Activated T-helper 1 cell treated with anti-CD3 and anti-CD28 coated beads, Interleukin-12 subunit alpha, Interleukin-12 subunit beta, Interleukin-2, Interleukin-4 antibody, amounts not matched to agents 30 ng/mL and 10 ng/mL and 1 ng/mL, durations not matched to agents 14 hours and 24 hours and 36 hours (primary cell): ENCODE measurements at regions of chr1 and their contacts with region 1.

Region 1: DNA sequence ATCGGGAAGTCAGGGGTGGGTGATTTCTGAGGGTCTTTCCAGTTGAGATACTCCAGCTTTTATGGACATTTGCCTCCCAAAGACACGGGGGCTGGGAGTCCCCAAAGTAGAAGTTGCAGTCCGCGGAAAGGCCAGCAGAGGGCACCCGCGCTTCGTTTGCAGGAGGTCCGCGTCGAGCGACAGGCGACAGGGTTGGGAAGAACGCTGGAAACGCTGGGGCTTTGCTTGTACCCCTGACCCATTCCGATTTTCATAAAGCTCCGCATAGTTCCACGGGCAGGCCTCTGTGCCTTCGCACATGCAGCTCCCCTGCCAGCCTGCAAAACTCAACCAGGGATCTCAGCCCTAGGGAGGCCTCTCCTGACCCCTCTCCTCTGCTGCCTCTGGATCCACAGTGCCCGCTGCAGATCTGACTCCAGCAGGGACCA is 44.2 kb upstream of the LAPTM5 start:
- DNase-seq: peak; percentile 63
- H3K4me3 Mint-ChIP-seq: no peak overlapping the region
- H3K27ac Mint-ChIP-seq: no peak overlapping the region
- H3K4me1 Mint-ChIP-seq: no peaks in the 10 kb centered on the region
- H3K27me3 Mint-ChIP-seq: peaks cover 42% of the 10 kb centered on the region

Region 2: GRCh38 chr1:30911046-30911954 is 109.5 kb after region 1 on chr1:
- intact Hi-C with region 1: loop called (anchors 1 kb)
- DNase-seq: peak; percentile 13
- H3K4me3 Mint-ChIP-seq: no peak overlapping the region
- H3K27ac Mint-ChIP-seq: no peak overlapping the region
- H3K4me1 Mint-ChIP-seq: peaks cover 8% of the 10 kb centered on the region
- H3K27me3 Mint-ChIP-seq: peaks cover 35% of the 10 kb centered on the region

Region 3: DNA sequence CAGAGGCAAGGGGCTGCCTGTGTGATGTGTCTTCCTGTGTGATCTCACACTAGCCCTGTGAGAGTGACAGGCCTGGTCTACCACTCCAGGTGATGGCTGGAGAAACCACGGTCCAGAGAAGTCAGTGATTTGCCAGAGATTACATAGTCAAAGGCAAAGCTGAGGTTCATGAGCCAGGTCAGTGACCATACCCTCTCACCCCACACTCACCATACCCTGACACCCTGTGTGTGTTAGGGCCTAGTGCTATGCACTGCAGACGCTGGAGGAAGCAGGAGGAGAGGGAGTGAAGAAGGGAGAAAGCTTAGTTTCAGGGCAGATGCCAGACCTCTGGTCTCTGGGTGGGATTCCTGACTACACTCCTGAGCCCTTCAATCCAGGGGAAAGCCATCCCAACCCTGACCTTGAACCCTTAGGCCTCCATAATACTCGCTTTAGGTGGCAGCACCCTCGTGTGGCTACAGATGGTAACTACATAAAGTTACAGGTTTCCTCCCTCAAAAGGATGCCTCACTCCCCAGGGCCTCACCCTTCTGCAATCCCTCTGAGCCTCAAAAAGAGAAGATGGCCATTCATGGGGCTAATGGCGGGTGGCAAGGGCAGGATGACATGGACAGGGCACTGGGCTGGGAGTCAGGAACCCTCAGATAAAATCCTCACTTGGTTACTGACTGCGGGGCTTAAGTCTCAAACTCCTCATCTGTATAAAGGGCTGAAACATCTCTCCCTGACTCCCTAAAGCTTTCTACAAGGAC is 127.5 kb after region 1 on chr1:
- intact Hi-C with region 1: loop called (anchors 1 kb)
- DNase-seq: peak; percentile 30
- H3K4me3 Mint-ChIP-seq: no peak overlapping the region
- H3K27ac Mint-ChIP-seq: no peak overlapping the region
- H3K4me1 Mint-ChIP-seq: no peaks in the 10 kb centered on the region
- H3K27me3 Mint-ChIP-seq: peaks cover 3% of the 10 kb centered on the region